Right ventricle myocardium superior (tissue), 1 donor: ENCODE measurements at regions of chr12 and their contacts with region 1.

Region 1: DNA sequence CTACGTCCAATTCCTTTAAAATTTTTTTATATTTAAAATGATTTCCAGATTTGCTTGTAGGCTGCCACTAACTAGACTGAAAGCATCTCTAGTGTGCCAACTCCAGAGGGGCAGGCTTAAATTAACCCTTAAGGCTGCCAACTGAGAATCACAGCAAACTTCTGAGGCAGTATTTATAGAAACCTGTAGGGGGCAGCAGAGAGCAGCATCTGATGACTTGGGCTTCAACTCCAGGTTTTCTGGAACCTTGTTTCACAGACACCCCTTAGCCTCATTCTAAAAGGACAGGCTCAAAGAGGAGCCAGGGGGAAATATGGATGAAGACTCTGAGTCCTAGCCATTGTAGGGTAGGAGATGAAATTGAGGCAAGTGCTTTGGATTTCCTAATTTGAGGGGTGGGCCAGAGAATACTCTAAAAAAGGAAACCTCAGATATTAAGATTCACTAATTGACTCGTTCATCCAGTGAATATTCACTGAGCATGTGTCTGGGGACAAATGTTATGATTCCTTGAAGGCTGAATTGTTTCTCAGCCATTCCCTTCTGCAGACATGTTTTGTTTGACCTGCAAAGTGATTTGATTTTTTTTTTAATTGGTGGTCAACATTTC is 63.3 kb upstream of the HSPB8 start:
- DNase-seq: no peak
- ATAC-seq: peak; percentile 66

Region 2: GRCh38 chr12:119391673-119392072 is 276.3 kb after region 1 on chr12:
- intact Hi-C with region 1: no loop called
- DNase-seq: no peak
- ATAC-seq: peak; percentile 11

Region 3: DNA sequence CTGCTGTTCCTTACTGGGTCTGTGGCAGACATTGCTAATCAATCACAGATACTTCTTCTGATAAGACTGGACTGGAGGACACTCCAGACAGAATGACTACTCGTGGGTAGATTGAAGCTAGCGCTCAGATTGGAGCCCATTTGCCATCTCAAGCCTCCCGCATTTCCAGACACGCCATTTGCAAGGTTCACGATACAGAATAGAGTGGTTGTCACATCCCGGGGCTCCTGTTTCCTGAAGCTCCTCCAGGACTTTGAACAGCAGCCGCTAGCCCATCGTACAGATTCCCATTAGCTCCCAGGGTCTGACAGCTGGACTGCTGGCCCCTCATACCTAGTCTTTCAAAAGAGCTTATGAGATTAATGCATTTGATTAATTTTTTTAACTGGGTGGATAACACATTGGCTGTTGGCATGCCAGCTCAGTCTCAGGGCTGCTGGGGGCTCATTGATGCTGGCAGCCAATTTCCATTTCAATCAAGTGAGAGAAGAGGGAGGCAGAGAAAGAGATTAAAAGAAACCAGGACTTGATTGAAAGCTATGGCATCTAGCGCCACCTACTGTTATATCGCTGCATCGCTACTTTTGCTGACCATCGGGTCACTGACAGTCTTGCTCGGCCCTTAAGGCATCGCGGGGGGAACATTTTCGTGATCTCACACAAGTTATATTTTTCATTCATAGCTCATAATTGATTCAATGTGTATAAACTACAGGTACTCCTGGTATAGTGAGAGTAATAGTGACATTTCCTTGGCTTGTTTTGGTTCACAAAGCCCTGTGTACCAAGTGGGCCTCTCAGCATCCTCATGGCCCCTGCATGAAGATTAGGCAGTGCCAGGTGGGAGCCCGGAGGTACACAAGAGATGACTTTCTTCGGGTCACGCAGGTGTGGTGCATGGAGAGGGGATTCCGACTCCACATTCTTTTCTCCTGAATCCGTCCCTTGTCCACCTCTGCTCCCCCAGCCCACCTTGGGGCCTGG is 297.7 kb after region 1 on chr12:
- intact Hi-C with region 1: loop called (anchors 5 kb)
- DNase-seq: peak; percentile 61
- ATAC-seq: peak; percentile 77

Region 4: GRCh38 chr12:119544765-119545625 is 429.6 kb after region 1 on chr12:
- intact Hi-C with region 1: loop called (anchors 10 kb)
- DNase-seq: peak; percentile 57
- ATAC-seq: peak; percentile 67